HCT116 (cell line): ENCODE measurements at regions of chr6 and their contacts with region 1.

Region 1: DNA sequence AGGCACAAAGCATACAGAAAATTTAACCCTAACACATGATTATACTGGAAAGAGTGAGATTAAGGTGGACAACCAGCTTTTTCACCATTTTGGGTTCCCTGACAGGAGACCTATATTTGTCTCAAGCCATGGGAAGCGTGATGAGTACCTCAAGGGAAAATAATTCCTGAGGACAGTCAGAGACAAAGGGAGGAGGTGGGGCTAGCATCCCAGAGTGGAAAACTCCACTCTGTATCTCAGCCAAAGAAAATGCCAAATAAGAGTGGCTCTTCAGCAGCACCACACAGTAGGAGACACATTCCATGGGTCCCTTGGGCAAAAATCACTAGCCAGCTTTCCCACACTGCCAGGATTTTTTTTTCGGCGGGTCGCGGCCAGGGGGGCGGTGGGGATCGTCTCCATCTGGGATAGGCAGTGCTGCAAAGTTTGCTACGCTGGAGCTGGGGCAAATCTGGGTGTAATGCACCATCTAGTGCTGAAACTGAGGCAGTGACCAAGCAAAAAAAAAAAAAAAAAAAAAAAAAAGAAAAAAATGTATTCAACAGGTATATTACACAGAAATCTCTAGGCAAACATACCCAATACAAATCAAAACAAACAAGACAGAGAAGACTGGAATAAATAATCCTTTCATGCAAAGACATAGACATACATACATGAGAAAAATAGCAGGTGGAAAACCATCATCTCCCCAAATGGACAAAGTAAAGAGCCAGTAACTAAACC is 77.3 kb upstream of the SLC35F1 start:
- DNase-seq: peak; percentile 51
- ATAC-seq: peak; percentile 98
- H3K4me3 ChIP-seq: peak overlapping the region; percentile 39 to 43
- H3K27ac ChIP-seq: 0 out of 2 replicates have a peak overlapping the region, but pooled peaks have one; percentile 6
- H3K4me1 ChIP-seq: peaks cover 3 to 4% of the 10 kb centered on the region in 2 experiments; a peak in 2 of 4 replicates
- H3K27me3 ChIP-seq: no peaks in the 10 kb centered on the region
- CTCF ChIP-seq: peak; percentile 54 to 66 (median 56)
- POLR2A ChIP-seq: no peak
- RAD21 ChIP-seq: peak; percentile 80

Region 2: GRCh38 chr6:116975600-116975999 is 854.2 kb before region 1 on chr6:
- CTCF ChIA-PET with region 1: no interaction called
- POLR2A ChIA-PET with region 1: no interaction called
- RAD21 ChIA-PET with region 1: no interaction called
- intact Hi-C with region 1: loop called (anchors 5 kb)
- DNase-seq: no peak
- ATAC-seq: no peak
- H3K4me3 ChIP-seq: no peak overlapping the region
- H3K27ac ChIP-seq: no peak overlapping the region
- H3K4me1 ChIP-seq: no peaks in the 10 kb centered on the region
- H3K27me3 ChIP-seq: no peaks in the 10 kb centered on the region
- CTCF ChIP-seq: no peak
- POLR2A ChIP-seq: no peak
- RAD21 ChIP-seq: no peak

Region 3: GRCh38 chr6:117346142-117346930 is 483.4 kb before region 1 on chr6:
- CTCF ChIA-PET with region 1: interaction called, 3 read pairs
- POLR2A ChIA-PET with region 1: no interaction called
- RAD21 ChIA-PET with region 1: interaction called in 1 of 2 experiments, 4 read pairs
- intact Hi-C with region 1: loop called (anchors 1 kb)
- DNase-seq: no peak
- ATAC-seq: 0 out of 2 replicates have a peak, but pooled peaks have one; percentile 36
- H3K4me3 ChIP-seq: no peak overlapping the region
- H3K27ac ChIP-seq: no peak overlapping the region
- H3K4me1 ChIP-seq: no peaks in the 10 kb centered on the region
- H3K27me3 ChIP-seq: no peaks in the 10 kb centered on the region
- CTCF ChIP-seq: peak; percentile 27 to 57 (median 53); a peak in 4 of 6 replicates
- POLR2A ChIP-seq: no peak
- RAD21 ChIP-seq: peak; percentile 71

Region 4: GRCh38 chr6:117555882-117556498 is 273.8 kb before region 1 on chr6:
- CTCF ChIA-PET with region 1: interaction called, 3 read pairs
- POLR2A ChIA-PET with region 1: no interaction called
- RAD21 ChIA-PET with region 1: no interaction called
- intact Hi-C with region 1: loop called (anchors 5 kb)
- DNase-seq: no peak
- ATAC-seq: peak; percentile 58
- H3K4me3 ChIP-seq: no peak overlapping the region
- H3K27ac ChIP-seq: no peak overlapping the region
- H3K4me1 ChIP-seq: peaks cover under 1 to 7% of the 10 kb centered on the region in 2 experiments; a peak in 2 of 4 replicates
- H3K27me3 ChIP-seq: no peaks in the 10 kb centered on the region
- CTCF ChIP-seq: peak; percentile 61 to 87 (median 77); a peak in 5 of 6 replicates
- POLR2A ChIP-seq: no peak
- RAD21 ChIP-seq: peak; percentile 83

Region 5: GRCh38 chr6:117602151-117602898 is 227.4 kb before region 1 on chr6 and contains the start of gene GOPC:
- CTCF ChIA-PET with region 1: no interaction called
- POLR2A ChIA-PET with region 1: no interaction called
- RAD21 ChIA-PET with region 1: no interaction called
- intact Hi-C with region 1: loop called (anchors 10 kb)
- DNase-seq: peak; percentile 95
- ATAC-seq: peak; percentile 90
- H3K4me3 ChIP-seq: peak within 1 kb of the TSS; percentile 88 to 89
- H3K27ac ChIP-seq: peak within 1 kb of the TSS; percentile 86
- H3K4me1 ChIP-seq: peaks cover 9 to 18% of the 10 kb centered on the region in 2 experiments
- H3K27me3 ChIP-seq: no peaks in the 10 kb centered on the region
- CTCF ChIP-seq: 0 out of 6 replicates have a peak, but pooled peaks of 1 of the 3 experiments have one; percentile 12
- POLR2A ChIP-seq: peak; percentile 77
- RAD21 ChIP-seq: no peak
- total RNA-seq, gene GOPC: 24.2 TPM

Region 6: GRCh38 chr6:118207947-118208346 is 378.2 kb after region 1 on chr6:
- CTCF ChIA-PET with region 1: no interaction called
- POLR2A ChIA-PET with region 1: no interaction called
- RAD21 ChIA-PET with region 1: no interaction called
- intact Hi-C with region 1: no loop called
- DNase-seq: no peak
- ATAC-seq: no peak
- H3K4me3 ChIP-seq: no peak overlapping the region
- H3K27ac ChIP-seq: no peak overlapping the region
- H3K4me1 ChIP-seq: no peaks in the 10 kb centered on the region
- H3K27me3 ChIP-seq: no peaks in the 10 kb centered on the region
- CTCF ChIP-seq: no peak
- POLR2A ChIP-seq: no peak
- RAD21 ChIP-seq: no peak